ENCODE measurements at regions of chr16 and their contacts with region 1.

Region 1: GRCh38 chr16:84186685-84187437 is at the start of gene TAF1C:
- DNase-seq: peak; percentile 87 to 98 (median 93)
- H3K4me3 ChIP-seq: peak within 1 kb of the TSS; percentile 24 to 89 (median 68)
- H3K27ac ChIP-seq: peak within 1 kb of the TSS in 4 of 5 donors; percentile 7 to 79 (median 50)
- H3K4me1 ChIP-seq: peaks cover 8 to 16% of the 10 kb centered on the region in 2 donors
- H3K27me3 ChIP-seq: no peaks in the 10 kb centered on the region
- CTCF ChIP-seq: peak; percentile 80 to 96 (median 92)
- POLR2A ChIP-seq: peak in 1 of 2 donors; percentile 28
- total RNA-seq, gene TAF1C: 18.9 to 66.7 (median 38.0) TPM

Region 2: GRCh38 chr16:83956336-83957289 is 230.2 kb before region 1 on chr16:
- intact Hi-C with region 1: loop called (anchors 5 to 10 kb)
- DNase-seq: peak; percentile 84 to 94 (median 90)
- H3K4me3 ChIP-seq: no peak overlapping the region
- H3K27ac ChIP-seq: peak overlapping the region in 3 of 5 donors; percentile 17 to 99 (median 27)
- H3K4me1 ChIP-seq: peaks cover 24 to 51% of the 10 kb centered on the region in 2 donors
- H3K27me3 ChIP-seq: no peaks in the 10 kb centered on the region
- CTCF ChIP-seq: peak; percentile 46 to 81 (median 72)
- POLR2A ChIP-seq: no peak

Region 3: GRCh38 chr16:84084570-84085270 is 102.1 kb before region 1 on chr16:
- intact Hi-C with region 1: loop called in 1 of 2 experiments (anchors 10 kb)
- DNase-seq: peak; percentile 55 to 84 (median 68)
- H3K4me3 ChIP-seq: no peak overlapping the region
- H3K27ac ChIP-seq: no peak overlapping the region
- H3K4me1 ChIP-seq: peaks cover 18 to 38% of the 10 kb centered on the region in 2 donors
- H3K27me3 ChIP-seq: no peaks in the 10 kb centered on the region
- CTCF ChIP-seq: peak; percentile 37 to 70 (median 58)
- POLR2A ChIP-seq: no peak

Measured in adrenal gland (tissue), 19 donors.